RWPE1 (cell line): ENCODE measurements at regions of chr16 and their contacts with region 1.

Region 1: GRCh38 chr16:70438969-70439862 is at the start of gene ST3GAL2:
- DNase-seq: peak; percentile 95
- H3K27ac ChIP-seq: peak within 1 kb of the TSS; percentile 80
- CTCF ChIP-seq: no peak

Region 2: GRCh38 chr16:70250748-70251628 is 188.2 kb before region 1 on chr16:
- CTCF ChIA-PET with region 1: no interaction called
- POLR2A ChIA-PET with region 1: no interaction called
- DNase-seq: peak; percentile 45
- H3K27ac ChIP-seq: peak overlapping the region; percentile 94
- CTCF ChIP-seq: no peak

Region 3: GRCh38 chr16:70380861-70381603 is 58.2 kb before region 1 on chr16:
- CTCF ChIA-PET with region 1: interaction called, 7 read pairs
- POLR2A ChIA-PET with region 1: interaction called, 11 read pairs
- DNase-seq: peak; percentile 96
- H3K27ac ChIP-seq: peak overlapping the region; percentile 96
- CTCF ChIP-seq: peak; percentile 59

Region 4: GRCh38 chr16:70715055-70715858 is 276.0 kb after region 1 on chr16:
- CTCF ChIA-PET with region 1: no interaction called
- POLR2A ChIA-PET with region 1: no interaction called
- DNase-seq: peak; percentile 98
- H3K27ac ChIP-seq: peak overlapping the region; percentile 100
- CTCF ChIP-seq: no peak; the same call in 1 of the 2 replicates